MCF 10A (cell line): ENCODE measurements at regions of chr2 and their contacts with region 1.

Region 1: DNA sequence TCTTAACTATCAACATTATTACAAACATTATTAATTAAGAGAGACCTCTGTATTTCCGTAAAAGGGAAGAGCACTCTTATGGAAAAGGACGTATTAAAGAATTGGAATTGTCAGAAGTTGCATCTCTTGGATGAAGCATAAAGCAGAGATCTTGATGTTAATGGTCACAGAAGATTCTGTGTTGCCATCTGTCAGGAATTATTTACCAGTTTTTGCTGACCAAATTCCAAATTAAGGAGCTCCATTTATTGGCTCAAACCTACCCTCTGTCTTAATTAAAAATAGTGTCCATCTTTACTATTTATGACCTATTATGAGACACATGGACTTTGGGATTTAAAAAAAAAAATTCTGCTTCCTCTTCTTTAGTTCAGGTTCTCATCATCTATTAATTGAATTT is 232.1 kb downstream of the ARHGAP15 start:
- DNase-seq: no peak
- H3K4me3 Mint-ChIP-seq: no peak overlapping the region
- H3K27ac Mint-ChIP-seq: no peak overlapping the region
- H3K4me1 Mint-ChIP-seq: no peaks in the 10 kb centered on the region
- H3K27me3 Mint-ChIP-seq: no peaks in the 10 kb centered on the region
- CTCF ChIP-seq: no peak

Region 2: GRCh38 chr2:143375384-143375880 is 14.1 kb after region 1 on chr2:
- CTCF ChIA-PET with region 1: no interaction called
- POLR2A ChIA-PET with region 1: no interaction called
- intact Hi-C with region 1: loop called (anchors 2 kb)
- DNase-seq: no peak
- H3K4me3 Mint-ChIP-seq: no peak overlapping the region
- H3K27ac Mint-ChIP-seq: no peak overlapping the region
- H3K4me1 Mint-ChIP-seq: no peaks in the 10 kb centered on the region
- H3K27me3 Mint-ChIP-seq: no peaks in the 10 kb centered on the region
- CTCF ChIP-seq: no peak